Right cardiac atrium (tissue), 5 donors: ENCODE measurements at regions of chr12 and their contacts with region 1.

Region 1: GRCh38 chr12:6182116-6182898 is 17.9 kb upstream of the CD9 start:
- DNase-seq: peak; percentile 75 to 88 (median 88)
- ATAC-seq: peak; percentile 79
- H3K4me3 ChIP-seq: no peak overlapping the region
- H3K27ac ChIP-seq: peak overlapping the region; percentile 65
- H3K4me1 ChIP-seq: peaks cover 26% of the 10 kb centered on the region
- H3K27me3 ChIP-seq: no peaks in the 10 kb centered on the region

Region 2: GRCh38 chr12:6069437-6070107 is 112.7 kb before region 1 on chr12:
- intact Hi-C with region 1: loop called in 2 of 4 experiments (anchors 5 to 10 kb)
- DNase-seq: peak in 1 of 3 donors; percentile 17
- ATAC-seq: no peak
- H3K4me3 ChIP-seq: no peak overlapping the region
- H3K27ac ChIP-seq: peak overlapping the region; percentile 27
- H3K4me1 ChIP-seq: no peaks in the 10 kb centered on the region
- H3K27me3 ChIP-seq: no peaks in the 10 kb centered on the region

Region 3: GRCh38 chr12:6295094-6295811 is 112.9 kb after region 1 on chr12:
- intact Hi-C with region 1: no loop called
- DNase-seq: peak in 1 of 3 donors; percentile 51
- ATAC-seq: peak; percentile 87 to 89
- H3K4me3 ChIP-seq: no peak overlapping the region
- H3K27ac ChIP-seq: peak overlapping the region; percentile 74
- H3K4me1 ChIP-seq: peaks cover 6% of the 10 kb centered on the region
- H3K27me3 ChIP-seq: no peaks in the 10 kb centered on the region